Right lobe of liver (tissue), 6 donors: ENCODE measurements at regions of chr7 and their contacts with region 1.

Region 1: GRCh38 chr7:36683695-36684357 is 40.5 kb downstream of the AOAH start:
- DNase-seq: no peak
- ATAC-seq: no peak
- H3K4me3 ChIP-seq: no peak overlapping the region
- H3K27ac ChIP-seq: no peak overlapping the region
- H3K4me1 ChIP-seq: no peaks in the 10 kb centered on the region
- H3K27me3 ChIP-seq: no peaks in the 10 kb centered on the region
- CTCF ChIP-seq: no peak
- POLR2A ChIP-seq: no peak

Region 2: GRCh38 chr7:36881233-36881874 is 197.5 kb after region 1 on chr7:
- intact Hi-C with region 1: loop called in 1 of 2 experiments (anchors 5 kb)
- DNase-seq: no peak
- ATAC-seq: no peak
- H3K4me3 ChIP-seq: no peak overlapping the region
- H3K27ac ChIP-seq: no peak overlapping the region
- H3K4me1 ChIP-seq: peaks cover 0 to 9% (median 4%) of the 10 kb centered on the region in 4 donors
- H3K27me3 ChIP-seq: no peaks in the 10 kb centered on the region
- CTCF ChIP-seq: no peak
- POLR2A ChIP-seq: no peak

Region 3: DNA sequence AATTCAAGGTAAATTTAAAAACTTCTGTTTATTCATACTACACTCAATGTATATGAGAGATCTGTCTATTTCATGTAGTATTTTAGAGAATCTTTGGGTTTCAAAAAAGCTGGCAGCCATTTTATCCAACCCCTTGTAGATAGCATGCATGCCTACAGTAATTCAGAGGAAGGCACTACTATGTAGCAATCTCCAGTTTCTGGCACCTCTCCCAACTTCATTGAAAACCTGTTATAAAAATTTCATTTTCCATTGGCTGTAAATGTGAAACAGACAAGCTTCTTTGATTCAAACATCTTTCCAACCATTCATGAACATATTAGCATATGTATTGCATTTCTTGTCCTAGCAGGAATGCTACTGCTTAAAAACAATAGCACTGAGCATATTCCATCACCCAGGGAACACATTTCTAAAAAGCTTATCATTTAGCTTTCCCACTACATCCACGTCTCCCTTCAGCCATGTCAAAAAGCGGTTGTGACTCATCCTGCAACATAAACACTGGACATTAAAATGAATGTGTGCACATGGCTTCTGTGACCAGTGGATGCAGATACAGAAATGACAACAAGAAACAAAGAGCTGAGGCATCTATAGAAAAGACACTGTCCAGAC is 370.9 kb after region 1 on chr7:
- intact Hi-C with region 1: no loop called
- DNase-seq: no peak
- ATAC-seq: no peak
- H3K4me3 ChIP-seq: no peak overlapping the region
- H3K27ac ChIP-seq: no peak overlapping the region
- H3K4me1 ChIP-seq: no peaks in the 10 kb centered on the region
- H3K27me3 ChIP-seq: no peaks in the 10 kb centered on the region
- CTCF ChIP-seq: no peak
- POLR2A ChIP-seq: no peak